Gastrocnemius medialis (tissue), 4 donors: ENCODE measurements at regions of chr1 and their contacts with region 1.

Region 1: DNA sequence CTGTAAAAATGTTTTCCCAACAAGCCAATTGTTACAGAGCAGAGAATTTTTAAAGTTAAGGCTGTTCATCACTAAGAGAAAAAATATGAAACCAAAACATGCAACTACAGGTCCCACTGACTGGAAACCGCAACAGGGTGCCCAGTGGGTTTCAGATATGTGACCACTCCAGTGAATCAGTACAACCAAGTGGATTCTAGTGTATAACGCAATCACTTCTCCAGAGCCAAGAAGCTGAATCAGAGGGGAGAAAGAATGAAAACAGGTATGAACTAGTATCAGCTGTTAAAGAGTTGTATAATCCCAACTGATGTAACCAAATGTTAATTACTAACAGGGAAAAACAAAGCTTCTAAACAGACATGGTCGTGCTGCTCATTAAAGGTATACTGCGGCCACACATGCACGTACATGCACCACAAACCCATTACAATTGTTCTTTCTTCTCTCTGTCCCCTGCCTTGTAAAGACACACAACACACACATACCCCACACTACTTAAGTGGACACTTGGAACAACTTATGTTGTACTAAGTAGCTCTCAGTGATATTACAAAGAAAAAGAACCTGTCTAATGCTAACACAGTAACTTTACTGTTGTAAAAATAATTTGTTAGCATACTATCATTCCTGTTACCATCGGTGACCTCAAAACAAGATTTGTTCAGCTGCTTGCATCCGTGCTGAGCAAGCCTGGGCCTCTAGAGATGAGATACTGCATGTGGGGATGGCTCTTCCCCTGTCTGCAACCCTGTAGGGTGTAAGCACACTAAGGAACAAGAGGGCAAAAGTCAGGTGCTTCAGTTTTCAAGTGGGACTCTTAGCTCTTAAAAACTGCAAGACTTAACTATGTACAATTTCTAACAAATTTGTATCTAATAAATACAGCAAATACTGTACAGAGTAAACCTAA is 74.2 kb downstream of the PTPN14 start:
- DNase-seq: no peak
- ATAC-seq: no peak
- H3K4me3 ChIP-seq: no peak overlapping the region
- H3K27ac ChIP-seq: no peak overlapping the region
- H3K4me1 ChIP-seq: peaks cover 56 to 64% of the 10 kb centered on the region in 2 donors
- H3K27me3 ChIP-seq: no peaks in the 10 kb centered on the region
- CTCF ChIP-seq: no peak
- POLR2A ChIP-seq: no peak

Region 2: DNA sequence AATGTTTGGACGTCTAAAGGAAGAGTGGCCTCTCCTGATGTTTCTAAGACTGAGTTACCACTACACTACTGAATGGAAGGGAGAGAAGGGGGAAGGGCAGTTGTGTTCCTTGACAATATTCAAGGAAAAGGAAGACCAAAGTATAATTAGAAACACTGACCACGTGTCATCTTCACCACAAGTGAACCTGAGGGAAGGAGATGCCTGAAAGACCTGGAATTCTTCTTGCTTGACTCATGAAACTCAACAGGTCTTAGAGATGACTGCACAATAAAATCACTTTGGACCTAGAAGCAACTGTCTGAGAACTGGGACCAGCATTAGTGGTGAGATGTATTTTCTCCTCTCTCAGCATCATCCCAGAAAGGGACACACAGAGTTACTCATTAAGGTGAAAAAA is 17.5 kb after region 1 on chr1:
- in situ Hi-C with region 1: no loop called
- intact Hi-C with region 1: loop called (anchors 2 kb)
- DNase-seq: no peak
- ATAC-seq: peak in 1 of 2 donors; percentile 10
- H3K4me3 ChIP-seq: no peak overlapping the region
- H3K27ac ChIP-seq: peak overlapping the region; percentile 72 to 90 (median 78)
- H3K4me1 ChIP-seq: peaks cover 64 to 88% of the 10 kb centered on the region in 2 donors
- H3K27me3 ChIP-seq: no peaks in the 10 kb centered on the region
- CTCF ChIP-seq: no peak
- POLR2A ChIP-seq: no peak

Region 3: GRCh38 chr1:214525535-214526019 is 48.4 kb after region 1 on chr1:
- in situ Hi-C with region 1: no loop called
- intact Hi-C with region 1: no loop called
- DNase-seq: peak; percentile 66 to 77
- ATAC-seq: peak; percentile 87 to 95
- H3K4me3 ChIP-seq: peak overlapping the region in 3 of 4 donors; percentile 5 to 14 (median 9)
- H3K27ac ChIP-seq: peak overlapping the region; percentile 71 to 83 (median 80)
- H3K4me1 ChIP-seq: peaks cover 71 to 72% of the 10 kb centered on the region in 2 donors
- H3K27me3 ChIP-seq: no peaks in the 10 kb centered on the region
- CTCF ChIP-seq: no peak
- POLR2A ChIP-seq: no peak

Region 4: DNA sequence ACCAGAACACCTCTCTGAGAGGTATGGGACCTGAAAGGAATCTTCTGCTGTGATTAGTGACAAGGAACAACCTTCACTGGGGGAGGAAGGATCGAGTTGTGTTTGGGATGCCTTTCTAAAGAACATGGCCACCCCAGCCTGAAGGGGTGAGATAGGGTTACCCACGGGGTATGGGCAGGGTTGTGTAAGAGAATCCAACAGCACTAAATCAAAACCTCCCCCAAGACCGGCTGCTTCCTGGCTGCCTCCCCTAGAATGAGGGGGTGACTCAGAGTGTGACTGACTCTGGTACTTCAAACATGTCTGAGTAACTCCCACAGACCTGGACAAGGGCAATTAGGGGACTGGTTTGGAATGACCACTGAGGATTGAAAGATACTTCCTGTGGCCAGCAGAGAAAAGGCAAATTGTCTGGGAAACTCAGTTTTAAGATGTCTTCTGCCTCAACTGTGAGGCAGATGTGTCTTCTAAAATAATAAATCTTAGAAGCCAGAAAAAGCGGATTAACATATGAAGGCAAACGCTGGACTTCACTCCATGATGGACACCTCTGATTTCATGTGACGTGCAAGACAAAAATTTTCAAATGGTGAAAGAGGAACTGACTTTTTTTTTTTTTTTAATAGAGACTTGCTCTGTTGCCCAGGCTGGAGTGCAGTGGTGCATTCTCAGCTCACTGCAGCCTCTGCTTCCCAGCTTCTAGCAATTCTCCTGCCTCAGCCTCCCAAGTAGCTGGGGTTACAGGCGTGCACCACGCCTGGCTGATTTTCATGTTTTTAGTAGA is 80.9 kb after region 1 on chr1:
- in situ Hi-C with region 1: no loop called
- intact Hi-C with region 1: loop called (anchors 5 kb)
- DNase-seq: no peak
- ATAC-seq: no peak
- H3K4me3 ChIP-seq: no peak overlapping the region
- H3K27ac ChIP-seq: no peak overlapping the region
- H3K4me1 ChIP-seq: peaks cover 6 to 10% of the 10 kb centered on the region in 2 donors
- H3K27me3 ChIP-seq: no peaks in the 10 kb centered on the region
- CTCF ChIP-seq: no peak
- POLR2A ChIP-seq: no peak